ENCODE measurements at regions of chr2 and their contacts with region 1.

Region 1: DNA sequence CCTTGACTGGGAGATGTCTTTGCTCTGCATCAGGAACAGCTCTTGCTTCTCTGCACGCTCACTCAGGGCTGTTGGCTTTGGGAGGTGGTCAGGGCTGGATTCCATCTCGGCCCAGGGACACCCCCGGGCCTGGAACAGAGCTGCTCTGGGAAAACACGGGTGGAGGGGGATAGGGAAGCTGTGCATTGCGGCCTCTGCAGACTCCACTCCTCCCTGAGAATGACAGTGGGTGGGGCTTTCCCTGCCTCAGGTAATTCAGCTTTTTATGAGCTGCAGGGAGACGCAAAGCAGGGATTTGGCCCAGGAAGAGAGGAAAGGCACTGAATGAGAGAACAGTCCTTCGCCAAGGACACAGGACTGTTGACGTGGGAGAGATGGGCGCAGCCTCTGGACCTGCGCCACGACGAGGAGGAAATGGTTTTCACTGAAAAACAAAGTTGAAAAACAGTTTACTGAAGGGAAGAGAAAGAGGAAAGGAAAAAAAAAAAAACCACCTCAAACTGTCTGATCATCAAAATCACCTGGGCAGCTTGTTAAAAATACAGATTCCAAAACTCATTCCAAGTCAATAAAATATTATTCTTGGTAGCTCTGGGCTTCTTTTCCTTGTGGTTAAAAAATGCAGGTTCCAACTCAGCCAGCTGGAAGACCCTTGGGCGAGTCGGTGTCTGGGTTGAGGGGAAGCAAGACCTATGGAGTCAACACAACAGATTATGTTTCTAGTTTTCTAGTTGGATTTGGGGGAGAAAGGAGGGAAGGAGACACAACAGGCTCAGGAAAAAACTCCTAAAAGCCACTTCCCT is 194.0 kb downstream of the ZFP36L2 start:
- DNase-seq: peak in 1 of 10 donors; percentile 41

Region 2: GRCh38 chr2:42685303-42685702 is 347.1 kb before region 1 on chr2:
- intact Hi-C with region 1: no loop called
- DNase-seq: no peak

Region 3: GRCh38 chr2:42787788-42788477 is 244.5 kb before region 1 on chr2:
- intact Hi-C with region 1: no loop called
- DNase-seq: peak in 1 of 10 donors; percentile 37

Region 4: GRCh38 chr2:42928692-42929545 is 103.5 kb before region 1 on chr2:
- intact Hi-C with region 1: no loop called
- DNase-seq: peak in 3 of 10 donors; percentile 46 to 67 (median 58)

Region 5: DNA sequence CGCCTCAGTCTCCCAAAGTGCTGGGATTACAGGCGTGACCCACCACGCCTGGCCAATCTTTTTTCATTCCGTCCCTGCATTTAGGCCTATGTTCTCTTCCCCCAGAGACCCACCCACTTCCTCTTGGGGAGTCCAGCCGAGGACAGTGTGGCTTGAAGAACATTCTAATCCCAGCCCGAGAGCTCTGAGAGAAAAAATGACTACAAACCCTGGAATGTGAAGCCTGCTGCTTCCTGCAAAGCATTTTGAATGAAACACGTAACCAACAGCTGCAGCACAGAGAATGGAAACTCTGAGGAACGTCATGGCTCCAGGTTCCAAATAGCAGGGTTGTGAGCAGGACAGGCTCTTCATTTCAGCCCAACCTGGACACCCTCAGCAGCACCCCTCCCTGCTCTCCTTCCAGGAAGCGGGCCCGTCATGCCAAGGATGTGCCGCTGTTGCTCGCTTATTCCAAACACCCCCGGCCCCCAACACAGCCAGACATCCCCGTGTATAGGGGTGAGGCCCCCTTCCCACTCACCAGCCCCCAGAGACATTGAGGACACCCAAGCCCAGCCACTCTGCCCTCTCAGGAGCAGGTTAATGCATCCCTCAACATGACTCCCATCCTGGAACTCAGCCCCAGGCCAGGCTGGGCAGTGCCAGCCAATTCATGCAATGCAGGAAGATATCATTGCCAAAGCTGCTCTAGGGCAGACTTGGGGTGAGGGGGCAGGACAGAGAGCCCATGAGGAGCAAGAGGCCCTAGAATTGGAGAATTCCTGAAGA is 54.2 kb after region 1 on chr2:
- intact Hi-C with region 1: loop called (anchors 10 kb)
- DNase-seq: peak in 1 of 10 donors; percentile 75

Measured in posterior cingulate gyrus (tissue), 11 donors.